Lower lobe of right lung (tissue), 2 donors: ENCODE measurements at regions of chr10 and their contacts with region 1.

Region 1: GRCh38 chr10:100338434-100339036 is 8.5 kb upstream of the SCD start:
- DNase-seq: peak; percentile 79
- ATAC-seq: peak; percentile 81 to 82
- H3K4me3 ChIP-seq: no peak overlapping the region
- H3K27ac ChIP-seq: no peak overlapping the region
- H3K4me1 ChIP-seq: peaks cover 19% of the 10 kb centered on the region
- H3K27me3 ChIP-seq: no peaks in the 10 kb centered on the region
- CTCF ChIP-seq: peak; percentile 92

Region 2: GRCh38 chr10:100433253-100434240 is 95.0 kb after region 1 on chr10:
- intact Hi-C with region 1: loop called (anchors 5 kb)
- DNase-seq: peak; percentile 90
- ATAC-seq: peak; percentile 92 to 99
- H3K4me3 ChIP-seq: no peak overlapping the region
- H3K27ac ChIP-seq: no peak overlapping the region
- H3K4me1 ChIP-seq: no peaks in the 10 kb centered on the region
- H3K27me3 ChIP-seq: no peaks in the 10 kb centered on the region
- CTCF ChIP-seq: peak; percentile 98

Region 3: DNA sequence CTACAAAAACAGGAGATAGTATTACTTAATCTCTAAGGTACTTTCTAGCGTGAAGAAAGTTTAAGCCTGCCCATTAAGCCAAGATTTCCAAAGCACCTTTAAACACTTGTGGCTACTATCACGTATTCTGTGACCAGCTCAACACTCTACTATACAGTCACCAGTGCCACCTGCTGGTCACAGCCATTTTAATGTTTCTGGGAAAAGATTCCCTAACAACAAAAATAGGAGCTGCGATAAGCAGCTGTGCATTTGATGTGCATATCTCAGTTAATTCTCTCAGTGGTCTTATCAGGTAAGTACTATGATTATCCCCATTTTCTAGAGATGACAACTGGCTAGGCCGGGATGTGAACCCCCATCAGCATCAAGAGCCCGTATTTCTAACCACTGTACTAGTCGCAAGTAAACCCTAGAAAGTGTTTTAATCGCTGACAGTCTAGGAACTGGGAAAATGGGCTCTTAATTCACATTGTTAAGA is 180.3 kb after region 1 on chr10:
- intact Hi-C with region 1: loop called (anchors 5 kb)
- DNase-seq: peak; percentile 50
- ATAC-seq: peak; percentile 82 to 84
- H3K4me3 ChIP-seq: peak overlapping the region; percentile 50
- H3K27ac ChIP-seq: no peak overlapping the region
- H3K4me1 ChIP-seq: peaks cover 17% of the 10 kb centered on the region
- H3K27me3 ChIP-seq: no peaks in the 10 kb centered on the region
- CTCF ChIP-seq: peak; percentile 68